Motor neuron (in vitro differentiated cells): ENCODE measurements at regions of chr3 and their contacts with region 1.

Region 1: GRCh38 chr3:12471243-12471651 is 13.0 kb upstream of the TSEN2 start:
- ATAC-seq: peak in 1 of 8 experiments; percentile 52
- H3K4me3 ChIP-seq: no peak overlapping the region
- H3K27ac ChIP-seq: no peak overlapping the region
- H3K4me1 ChIP-seq: no peaks in the 10 kb centered on the region

Region 2: DNA sequence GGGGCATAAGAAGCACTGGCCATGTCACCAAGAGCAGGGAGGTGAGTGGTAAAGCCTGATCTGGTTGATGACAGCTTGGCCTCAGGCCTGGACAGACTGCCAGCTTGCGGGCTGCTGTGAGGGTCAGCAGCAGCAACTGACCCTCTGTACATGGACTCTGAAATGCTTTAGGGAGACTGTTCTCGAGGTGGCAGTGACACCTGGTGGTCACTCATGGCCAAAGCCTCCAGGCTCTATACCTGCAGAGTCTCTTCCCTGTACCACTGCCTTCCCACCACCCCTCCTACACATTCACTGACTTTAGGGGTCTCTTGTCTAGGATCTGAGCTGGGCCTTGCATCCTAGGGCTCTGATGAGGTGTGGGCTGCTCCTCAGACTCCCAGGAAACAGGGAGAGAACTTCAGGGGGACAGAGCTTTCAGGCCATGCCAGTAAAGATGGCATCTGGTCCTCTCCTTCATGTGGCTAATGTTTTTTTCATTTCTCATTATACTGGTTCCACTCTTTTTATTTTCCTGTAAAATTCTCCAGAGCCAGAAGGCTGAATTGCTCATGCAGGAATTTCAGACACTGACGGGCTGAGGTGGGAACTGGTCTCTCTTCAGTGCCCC is 295.3 kb before region 1 on chr3:
- in situ Hi-C with region 1: loop called in 1 of 9 experiments (anchors 25 kb)
- ATAC-seq: peak; percentile 74 to 98 (median 92)
- H3K4me3 ChIP-seq: no peak overlapping the region
- H3K27ac ChIP-seq: no peak overlapping the region
- H3K4me1 ChIP-seq: no peaks in the 10 kb centered on the region